Activated CD4-positive, alpha-beta memory T cell treated with anti-CD3 and anti-CD28 coated beads for 36 hours (primary cell): ENCODE measurements at regions of chr10 and their contacts with region 1.

Region 1: DNA sequence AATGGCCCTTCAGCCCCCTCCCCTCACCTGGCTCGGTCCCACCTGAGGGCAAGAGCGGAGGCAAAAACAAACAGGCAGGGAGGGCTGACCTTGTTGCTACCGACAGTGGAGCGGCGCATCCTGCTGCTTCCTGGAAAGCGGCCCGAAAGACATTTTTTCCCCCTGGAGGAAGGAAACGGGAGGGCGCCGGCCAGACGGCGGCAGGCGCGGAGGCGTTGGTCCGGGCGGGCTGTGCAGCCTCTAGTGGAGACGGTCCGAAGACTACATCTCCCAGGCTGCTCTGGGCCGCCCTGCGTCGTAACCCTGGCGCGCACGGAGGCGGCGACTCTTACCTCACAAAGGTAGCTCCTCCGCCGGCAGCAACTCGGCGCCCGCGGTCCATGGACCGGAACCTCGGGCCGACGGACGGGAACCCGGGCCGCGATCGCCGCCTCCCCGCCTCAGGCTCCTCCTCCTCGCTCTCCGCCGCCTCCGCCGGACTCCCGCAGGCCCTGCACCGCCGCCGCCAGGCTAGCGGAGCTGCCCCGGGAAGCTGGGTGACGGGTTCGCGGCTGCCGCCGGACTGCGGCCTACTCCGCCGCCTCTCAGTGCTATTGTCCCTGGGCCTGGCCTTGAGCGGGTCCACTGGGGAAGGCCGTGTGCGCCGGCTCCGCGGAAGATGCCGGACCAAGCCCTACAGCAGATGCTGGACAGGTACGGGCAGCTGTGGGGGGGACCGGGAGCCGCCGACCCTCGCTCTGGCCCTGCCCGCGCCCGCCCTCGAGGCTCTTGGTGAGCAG is at the starts of genes CPEB3 and MARCHF5:
- DNase-seq: peak; percentile 96
- H3K4me3 Mint-ChIP-seq: peak within 1 kb of the TSS; percentile 83
- H3K27ac Mint-ChIP-seq: peak within 1 kb of the TSS; percentile 79
- H3K4me1 Mint-ChIP-seq: peaks cover 21% of the 10 kb centered on the region
- H3K27me3 Mint-ChIP-seq: no peaks in the 10 kb centered on the region
- total RNA-seq, gene CPEB3: 1.4 to 1.6 TPM
- total RNA-seq, gene MARCHF5: 27.4 to 29.1 TPM

Region 2: GRCh38 chr10:91210435-91210834 is 1080.6 kb before region 1 on chr10:
- CTCF ChIA-PET with region 1: no interaction called
- POLR2A ChIA-PET with region 1: no interaction called
- intact Hi-C with region 1: loop called (anchors 5 kb)
- DNase-seq: peak; percentile 49
- H3K4me3 Mint-ChIP-seq: no peak overlapping the region
- H3K27ac Mint-ChIP-seq: no peak overlapping the region
- H3K4me1 Mint-ChIP-seq: peaks cover 67% of the 10 kb centered on the region
- H3K27me3 Mint-ChIP-seq: no peaks in the 10 kb centered on the region

Region 3: DNA sequence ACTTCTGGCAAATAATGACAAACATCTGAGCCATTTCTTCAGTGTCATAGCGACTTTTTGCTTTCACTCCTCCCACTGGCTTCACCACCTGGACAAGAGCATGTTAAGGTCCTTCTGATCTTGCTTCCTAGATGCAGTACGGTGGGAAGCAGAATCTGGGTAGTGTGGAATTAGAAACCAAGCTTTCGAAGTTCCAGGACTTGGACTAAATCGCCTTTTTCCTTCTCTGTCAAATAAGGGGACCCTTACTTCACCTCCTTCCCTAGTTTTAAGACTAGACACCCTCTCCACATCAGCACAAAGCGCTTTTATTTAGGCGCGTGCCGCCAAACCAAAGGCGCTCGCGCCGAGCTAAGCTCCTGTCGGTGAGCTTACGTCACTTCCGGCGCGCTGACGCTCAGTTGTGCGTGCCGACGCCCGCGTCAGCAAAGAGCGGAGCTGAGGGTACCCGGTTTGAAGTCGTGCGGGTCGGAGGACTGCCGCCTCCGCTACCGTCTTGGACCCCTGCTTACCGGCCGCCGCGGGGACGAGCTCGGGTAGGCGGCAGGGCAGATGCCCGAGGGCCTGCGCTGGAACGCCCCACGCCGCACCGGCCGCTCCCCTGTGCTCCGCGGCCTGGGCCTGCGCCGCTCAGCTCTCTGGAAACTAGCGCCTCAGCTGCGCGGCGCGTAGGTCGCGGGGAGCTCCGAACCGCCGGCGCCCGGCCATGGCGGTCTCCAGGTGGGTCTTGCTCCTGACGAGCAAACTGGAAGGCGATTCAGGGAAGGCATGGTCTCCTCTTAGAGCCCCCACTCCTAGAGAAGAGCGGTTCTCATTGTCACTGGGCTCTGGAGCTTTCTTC is 367.4 kb before region 1 on chr10 and contains the start of gene BTAF1:
- CTCF ChIA-PET with region 1: interaction called, 4 read pairs
- POLR2A ChIA-PET with region 1: no interaction called
- intact Hi-C with region 1: loop called (anchors 1 kb)
- DNase-seq: peak; percentile 94
- H3K4me3 Mint-ChIP-seq: peak within 1 kb of the TSS; percentile 88
- H3K27ac Mint-ChIP-seq: peak within 1 kb of the TSS; percentile 97
- H3K4me1 Mint-ChIP-seq: peaks cover 37% of the 10 kb centered on the region
- H3K27me3 Mint-ChIP-seq: peaks cover 1% of the 10 kb centered on the region
- total RNA-seq, gene BTAF1: 49.9 to 50.7 TPM

Region 4: DNA sequence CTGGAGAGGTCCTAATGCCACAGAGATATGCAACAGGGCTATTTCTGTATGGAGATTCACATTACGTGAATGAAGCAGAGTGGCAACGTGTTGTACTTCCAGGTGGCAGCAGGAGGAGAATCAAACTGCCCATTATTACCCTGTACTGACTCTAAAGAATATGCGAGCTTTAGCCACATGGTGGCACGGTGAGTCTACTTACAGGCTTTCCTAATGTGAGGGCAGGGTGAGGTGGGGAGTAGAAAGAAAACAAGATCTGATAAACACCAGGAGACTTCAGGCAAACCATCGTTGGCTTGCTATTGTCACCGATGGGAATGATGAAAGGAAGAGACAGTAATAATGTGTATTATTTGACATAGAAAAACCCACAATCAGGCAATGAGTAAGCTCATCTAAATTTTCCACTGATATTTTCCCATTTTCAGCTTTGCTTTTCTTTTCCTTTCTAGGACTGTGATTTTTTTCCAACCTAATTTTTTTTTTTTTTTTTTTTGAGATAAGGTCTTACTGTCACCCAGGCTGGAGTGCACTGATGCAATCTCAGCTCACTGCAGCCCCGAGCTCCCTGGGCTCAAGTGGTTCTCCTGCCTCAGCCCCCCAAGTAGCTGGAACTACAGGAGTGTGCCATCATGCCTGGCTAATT is 203.2 kb before region 1 on chr10:
- CTCF ChIA-PET with region 1: interaction called, 30 read pairs
- POLR2A ChIA-PET with region 1: no interaction called
- intact Hi-C with region 1: loop called (anchors 1 kb)
- DNase-seq: peak; percentile 72
- H3K4me3 Mint-ChIP-seq: no peak overlapping the region
- H3K27ac Mint-ChIP-seq: no peak overlapping the region
- H3K4me1 Mint-ChIP-seq: peaks cover 10% of the 10 kb centered on the region
- H3K27me3 Mint-ChIP-seq: no peaks in the 10 kb centered on the region

Region 5: GRCh38 chr10:92208736-92209327 is 82.2 kb before region 1 on chr10:
- CTCF ChIA-PET with region 1: interaction called, 7 read pairs
- POLR2A ChIA-PET with region 1: interaction called, 4 read pairs
- intact Hi-C with region 1: loop called (anchors 2 kb)
- DNase-seq: peak; percentile 14
- H3K4me3 Mint-ChIP-seq: no peak overlapping the region
- H3K27ac Mint-ChIP-seq: no peak overlapping the region
- H3K4me1 Mint-ChIP-seq: peaks cover 15% of the 10 kb centered on the region
- H3K27me3 Mint-ChIP-seq: peaks cover 4% of the 10 kb centered on the region

Region 6: DNA sequence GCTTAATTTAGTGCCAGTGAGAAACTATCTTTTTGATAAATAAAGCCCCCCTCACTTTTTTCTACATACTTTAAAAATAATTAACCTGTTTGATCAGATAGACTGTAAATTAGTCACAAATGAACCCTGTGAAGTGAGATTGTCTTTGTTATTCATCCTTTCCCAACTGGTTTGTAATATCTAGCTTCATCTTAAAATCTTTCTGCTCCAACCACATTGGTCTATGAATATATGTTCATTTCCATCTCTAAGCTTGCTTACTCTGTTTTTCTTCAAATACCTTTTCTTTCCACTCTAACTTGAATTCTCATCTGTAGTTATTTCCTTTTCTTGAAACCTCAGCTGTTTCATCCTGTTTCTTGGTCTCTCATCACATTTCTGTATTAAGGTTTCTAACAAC is 12.1 kb after region 1 on chr10:
- CTCF ChIA-PET with region 1: interaction called, 12 read pairs
- POLR2A ChIA-PET with region 1: interaction called, 5 read pairs
- intact Hi-C with region 1: loop called (anchors 1 kb)
- DNase-seq: no peak
- H3K4me3 Mint-ChIP-seq: no peak overlapping the region
- H3K27ac Mint-ChIP-seq: peak overlapping the region; percentile 25
- H3K4me1 Mint-ChIP-seq: peaks cover 24% of the 10 kb centered on the region
- H3K27me3 Mint-ChIP-seq: no peaks in the 10 kb centered on the region

Region 7: DNA sequence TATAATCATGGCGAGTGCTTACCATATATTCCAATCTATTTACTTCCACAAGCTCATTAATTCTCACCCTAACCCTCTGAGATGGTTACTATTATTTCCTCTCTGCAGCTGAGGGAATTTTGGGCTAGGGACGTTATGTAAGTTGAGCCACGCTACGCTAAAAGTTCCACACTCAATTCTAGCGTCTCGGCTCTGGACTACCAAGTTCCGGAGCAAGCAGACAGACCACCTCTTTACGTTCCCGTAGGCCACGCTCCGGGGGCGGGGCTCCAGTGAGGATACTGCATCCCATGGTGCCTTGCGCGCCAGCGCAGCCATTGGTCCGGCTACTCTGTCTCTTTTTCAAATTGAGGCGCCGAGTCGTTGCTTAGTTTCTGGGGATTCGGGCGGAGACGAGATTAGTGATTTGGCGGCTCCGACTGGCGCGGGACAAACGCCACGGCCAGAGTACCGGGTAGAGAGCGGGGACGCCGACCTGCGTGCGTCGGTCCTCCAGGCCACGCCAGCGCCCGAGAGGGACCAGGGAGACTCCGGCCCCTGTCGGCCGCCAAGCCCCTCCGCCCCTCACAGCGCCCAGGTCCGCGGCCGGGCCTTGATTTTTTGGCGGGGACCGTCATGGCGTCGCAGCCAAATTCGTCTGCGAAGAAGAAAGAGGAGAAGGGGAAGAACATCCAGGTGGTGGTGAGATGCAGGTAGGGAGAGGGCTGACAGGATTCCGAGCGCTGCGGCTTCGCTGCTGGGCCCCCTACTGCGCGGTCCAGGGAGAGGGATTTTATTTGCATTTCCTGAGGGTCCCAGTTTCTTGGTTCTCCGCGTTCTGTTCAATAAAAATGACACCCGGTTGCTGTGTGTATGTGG is 302.0 kb after region 1 on chr10 and contains the start of gene KIF11:
- CTCF ChIA-PET with region 1: no interaction called
- POLR2A ChIA-PET with region 1: no interaction called
- intact Hi-C with region 1: loop called (anchors 1 kb)
- DNase-seq: peak; percentile 98
- H3K4me3 Mint-ChIP-seq: peak within 1 kb of the TSS; percentile 97
- H3K27ac Mint-ChIP-seq: peak within 1 kb of the TSS; percentile 100
- H3K4me1 Mint-ChIP-seq: peaks cover 40% of the 10 kb centered on the region
- H3K27me3 Mint-ChIP-seq: no peaks in the 10 kb centered on the region
- total RNA-seq, gene KIF11: 56.3 to 57.3 TPM